ENCODE measurements at regions of chr9 and their contacts with region 1.

Region 1: GRCh38 chr9:130997925-130998596 is 10.9 kb upstream of the LAMC3 start:
- DNase-seq: peak; percentile 75
- H3K4me3 ChIP-seq: no peak overlapping the region
- H3K27ac ChIP-seq: no peak overlapping the region
- H3K4me1 ChIP-seq: no peaks in the 10 kb centered on the region
- H3K27me3 ChIP-seq: no peaks in the 10 kb centered on the region
- CTCF ChIP-seq: peak; percentile 44

Region 2: GRCh38 chr9:130701056-130702022 is 296.7 kb before region 1 on chr9:
- intact Hi-C with region 1: loop called (anchors 5 kb)
- DNase-seq: peak; percentile 82
- H3K4me3 ChIP-seq: no peak overlapping the region
- H3K27ac ChIP-seq: no peak overlapping the region
- H3K4me1 ChIP-seq: no peaks in the 10 kb centered on the region
- H3K27me3 ChIP-seq: no peaks in the 10 kb centered on the region
- CTCF ChIP-seq: peak; percentile 97

Region 3: GRCh38 chr9:130866474-130866965 is 131.5 kb before region 1 on chr9:
- intact Hi-C with region 1: loop called (anchors 5 kb)
- DNase-seq: peak; percentile 92
- H3K4me3 ChIP-seq: no peak overlapping the region
- H3K27ac ChIP-seq: no peak overlapping the region
- H3K4me1 ChIP-seq: no peaks in the 10 kb centered on the region
- H3K27me3 ChIP-seq: no peaks in the 10 kb centered on the region
- CTCF ChIP-seq: peak; percentile 91

Region 4: DNA sequence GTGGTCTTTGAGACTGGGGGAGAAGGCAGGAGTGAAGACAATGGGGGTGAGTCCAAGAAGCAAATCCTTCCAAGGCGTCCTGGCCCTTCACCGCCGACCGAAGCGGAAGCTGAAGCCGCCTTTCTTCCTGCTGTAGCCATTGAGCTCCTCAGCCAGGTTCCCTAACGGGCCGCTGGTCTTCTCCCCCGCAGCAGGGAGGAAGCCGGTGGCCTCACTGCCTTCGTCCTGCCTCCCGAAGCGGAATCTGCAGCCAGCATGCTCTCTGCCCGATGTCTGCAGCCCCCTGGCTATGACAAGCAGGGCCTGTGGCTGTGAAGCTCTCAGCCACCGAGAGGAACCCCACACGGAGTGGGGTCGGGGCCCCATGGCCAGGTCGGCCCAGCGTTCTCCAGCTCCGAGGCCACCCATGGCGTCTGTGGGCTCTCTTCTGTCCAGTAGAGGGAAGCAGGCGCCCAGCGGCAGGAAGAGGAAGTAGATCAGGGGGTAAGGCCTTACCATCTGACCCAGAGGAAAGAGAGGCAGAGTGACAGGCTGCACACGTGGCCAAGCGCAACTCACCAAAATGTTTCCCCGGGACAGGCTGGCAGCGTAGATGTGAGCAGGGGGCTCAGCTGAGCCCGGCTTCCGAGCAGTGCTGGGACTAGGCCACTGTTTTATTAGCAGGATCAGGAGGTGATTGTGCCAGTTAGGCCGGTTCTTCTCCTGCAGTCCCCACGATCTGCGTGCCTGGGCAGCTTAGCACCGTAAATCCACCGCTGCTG is 104.5 kb before region 1 on chr9:
- intact Hi-C with region 1: loop called (anchors 10 kb)
- DNase-seq: no peak
- H3K4me3 ChIP-seq: no peak overlapping the region
- H3K27ac ChIP-seq: no peak overlapping the region
- H3K4me1 ChIP-seq: no peaks in the 10 kb centered on the region
- H3K27me3 ChIP-seq: no peaks in the 10 kb centered on the region
- CTCF ChIP-seq: peak; percentile 35